Heart left ventricle (tissue), 16 donors: ENCODE measurements at regions of chr20 and their contacts with region 1.

Region 1: GRCh38 chr20:24590178-24590982 is 121.0 kb downstream of the SYNDIG1 start:
- DNase-seq: no peak
- ATAC-seq: peak in 1 of 4 donors; percentile 13
- H3K4me3 ChIP-seq: no peak overlapping the region
- H3K27ac ChIP-seq: no peak overlapping the region
- H3K4me1 ChIP-seq: peaks cover 0 to 4% (median 0%) of the 10 kb centered on the region in 12 donors
- H3K27me3 ChIP-seq: no peaks in the 10 kb centered on the region
- CTCF ChIP-seq: no peak
- POLR2A ChIP-seq: no peak

Region 2: GRCh38 chr20:24462460-24463010 is 127.8 kb before region 1 on chr20:
- intact Hi-C with region 1: no loop called
- DNase-seq: no peak
- ATAC-seq: no peak
- H3K4me3 ChIP-seq: no peak overlapping the region
- H3K27ac ChIP-seq: no peak overlapping the region
- H3K4me1 ChIP-seq: peaks cover 0 to 18% (median 0%) of the 10 kb centered on the region in 12 donors
- H3K27me3 ChIP-seq: peaks cover 0 to 5% (median 0%) of the 10 kb centered on the region in 9 donors
- CTCF ChIP-seq: no peak
- POLR2A ChIP-seq: no peak

Region 3: DNA sequence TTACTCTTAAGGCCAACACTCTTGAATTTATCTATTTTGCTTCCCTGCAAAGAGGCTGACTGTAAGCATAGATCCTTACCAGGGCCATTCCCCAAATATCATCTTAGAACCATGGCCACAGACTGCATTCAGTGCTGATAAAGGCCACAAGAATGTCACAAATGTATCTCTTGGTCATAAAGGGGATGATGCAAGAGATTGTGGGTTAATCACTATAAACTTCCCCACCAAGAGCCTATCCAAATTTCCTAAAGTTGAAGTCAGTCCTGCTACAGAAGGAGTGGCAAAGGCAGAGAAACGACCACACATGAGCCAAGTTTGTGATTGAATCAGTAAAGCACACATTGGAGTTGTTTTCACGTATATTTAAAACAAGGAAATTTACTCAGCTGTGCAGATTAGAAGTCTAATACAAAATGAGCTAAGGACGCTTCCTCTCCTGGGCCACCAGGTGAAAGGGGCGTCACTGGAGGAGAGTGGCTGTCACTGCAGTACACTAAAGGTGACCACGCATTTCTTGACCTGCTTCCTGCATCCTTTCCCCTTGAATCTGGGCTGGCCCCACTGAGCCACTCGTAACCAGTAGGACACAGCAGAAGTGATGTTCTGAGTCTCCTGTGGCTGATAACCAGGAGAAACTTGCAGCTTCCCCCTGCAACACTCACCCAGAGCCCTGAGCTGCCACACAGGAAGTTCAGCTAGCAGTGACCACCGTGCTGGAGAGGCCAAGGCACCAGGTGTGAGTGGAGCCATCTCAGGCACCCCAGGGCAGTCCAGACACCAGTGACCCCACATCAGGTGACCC is 61.0 kb after region 1 on chr20:
- intact Hi-C with region 1: loop called in 1 of 10 experiments (anchors 10 kb)
- DNase-seq: no peak
- ATAC-seq: no peak
- H3K4me3 ChIP-seq: no peak overlapping the region
- H3K27ac ChIP-seq: no peak overlapping the region
- H3K4me1 ChIP-seq: no peaks in the 10 kb centered on the region
- H3K27me3 ChIP-seq: no peaks in the 10 kb centered on the region
- CTCF ChIP-seq: no peak
- POLR2A ChIP-seq: no peak

Region 4: GRCh38 chr20:24672886-24673677 is 82.7 kb after region 1 on chr20:
- intact Hi-C with region 1: loop called in 1 of 10 experiments (anchors 10 kb)
- DNase-seq: no peak
- ATAC-seq: no peak
- H3K4me3 ChIP-seq: no peak overlapping the region
- H3K27ac ChIP-seq: no peak overlapping the region
- H3K4me1 ChIP-seq: no peaks in the 10 kb centered on the region
- H3K27me3 ChIP-seq: no peaks in the 10 kb centered on the region
- CTCF ChIP-seq: no peak
- POLR2A ChIP-seq: no peak

Region 5: DNA sequence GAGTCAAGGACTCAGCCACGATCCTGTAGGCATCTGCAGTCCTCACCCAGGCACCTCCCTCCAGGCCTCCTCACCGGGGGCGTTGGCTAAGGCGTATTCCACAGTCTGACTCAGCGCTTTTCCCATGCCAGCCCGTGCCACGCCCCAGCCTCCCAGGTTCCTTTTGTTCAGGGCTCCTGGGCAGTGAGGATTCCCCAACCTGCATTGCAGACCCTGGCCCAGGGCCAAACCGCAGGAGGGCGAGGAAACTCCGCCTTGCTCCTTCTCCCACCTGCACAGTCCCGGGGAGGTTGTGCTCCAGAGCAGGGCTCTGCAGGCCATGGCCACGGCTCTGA is 155.9 kb after region 1 on chr20:
- intact Hi-C with region 1: no loop called
- DNase-seq: no peak
- ATAC-seq: peak in 1 of 4 donors; percentile 48
- H3K4me3 ChIP-seq: no peak overlapping the region
- H3K27ac ChIP-seq: no peak overlapping the region
- H3K4me1 ChIP-seq: no peaks in the 10 kb centered on the region
- H3K27me3 ChIP-seq: peaks cover 0 to 6% (median 0%) of the 10 kb centered on the region in 9 donors
- CTCF ChIP-seq: no peak
- POLR2A ChIP-seq: no peak